ENCODE measurements at regions of chr5 and their contacts with region 1.

Region 1: GRCh38 chr5:138178516-138179276 is at the starts of genes BRD8 and KIF20A:
- DNase-seq: peak; percentile 87
- H3K4me3 Mint-ChIP-seq: no peak within 1 kb of the TSS
- H3K27ac Mint-ChIP-seq: peak within 1 kb of the TSS; percentile 61
- H3K4me1 Mint-ChIP-seq: peaks cover 11% of the 10 kb centered on the region
- H3K27me3 Mint-ChIP-seq: no peaks in the 10 kb centered on the region
- total RNA-seq, gene BRD8: 51.8 and 57.9 TPM in 2 replicates
- total RNA-seq, gene KIF20A: 17.4 and 18.8 TPM in 2 replicates

Region 2: GRCh38 chr5:138213161-138214029 is 34.7 kb after region 1 on chr5 and contains the start of gene CDC23:
- intact Hi-C with region 1: loop called (anchors 1 kb)
- DNase-seq: peak; percentile 89
- H3K4me3 Mint-ChIP-seq: peak within 1 kb of the TSS; percentile 96
- H3K27ac Mint-ChIP-seq: peak within 1 kb of the TSS; percentile 93
- H3K4me1 Mint-ChIP-seq: peaks cover 24% of the 10 kb centered on the region
- H3K27me3 Mint-ChIP-seq: no peaks in the 10 kb centered on the region
- total RNA-seq, gene CDC23: 48.0 and 50.4 TPM in 2 replicates

Region 3: GRCh38 chr5:138337685-138338410 is 159.2 kb after region 1 on chr5 and contains the start of gene FAM53C:
- intact Hi-C with region 1: loop called (anchors 1 kb)
- DNase-seq: peak; percentile 90
- H3K4me3 Mint-ChIP-seq: peak within 1 kb of the TSS; percentile 94
- H3K27ac Mint-ChIP-seq: peak within 1 kb of the TSS; percentile 99
- H3K4me1 Mint-ChIP-seq: peaks cover 44% of the 10 kb centered on the region
- H3K27me3 Mint-ChIP-seq: no peaks in the 10 kb centered on the region
- total RNA-seq, gene FAM53C: 27.0 and 29.2 TPM in 2 replicates

Region 4: GRCh38 chr5:138438724-138439476 is 260.2 kb after region 1 on chr5 and contains the start of gene REEP2:
- intact Hi-C with region 1: loop called (anchors 1 kb)
- DNase-seq: peak; percentile 53
- H3K4me3 Mint-ChIP-seq: peak within 1 kb of the TSS; percentile 77
- H3K27ac Mint-ChIP-seq: peak within 1 kb of the TSS; percentile 67
- H3K4me1 Mint-ChIP-seq: peaks cover 13% of the 10 kb centered on the region
- H3K27me3 Mint-ChIP-seq: peaks cover 6% of the 10 kb centered on the region
- total RNA-seq, gene REEP2: 5.1 and 5.4 TPM in 2 replicates

Region 5: GRCh38 chr5:138542956-138543729 is 364.4 kb after region 1 on chr5 and contains the start of gene ETF1:
- intact Hi-C with region 1: loop called (anchors 1 kb)
- DNase-seq: peak; percentile 100
- H3K4me3 Mint-ChIP-seq: peak within 1 kb of the TSS; percentile 99
- H3K27ac Mint-ChIP-seq: peak within 1 kb of the TSS; percentile 100
- H3K4me1 Mint-ChIP-seq: peaks cover 54% of the 10 kb centered on the region
- H3K27me3 Mint-ChIP-seq: no peaks in the 10 kb centered on the region
- total RNA-seq, gene ETF1: 201 and 219 TPM in 2 replicates